ENCODE measurements at regions of chr14 and their contacts with region 1.

Region 1: DNA sequence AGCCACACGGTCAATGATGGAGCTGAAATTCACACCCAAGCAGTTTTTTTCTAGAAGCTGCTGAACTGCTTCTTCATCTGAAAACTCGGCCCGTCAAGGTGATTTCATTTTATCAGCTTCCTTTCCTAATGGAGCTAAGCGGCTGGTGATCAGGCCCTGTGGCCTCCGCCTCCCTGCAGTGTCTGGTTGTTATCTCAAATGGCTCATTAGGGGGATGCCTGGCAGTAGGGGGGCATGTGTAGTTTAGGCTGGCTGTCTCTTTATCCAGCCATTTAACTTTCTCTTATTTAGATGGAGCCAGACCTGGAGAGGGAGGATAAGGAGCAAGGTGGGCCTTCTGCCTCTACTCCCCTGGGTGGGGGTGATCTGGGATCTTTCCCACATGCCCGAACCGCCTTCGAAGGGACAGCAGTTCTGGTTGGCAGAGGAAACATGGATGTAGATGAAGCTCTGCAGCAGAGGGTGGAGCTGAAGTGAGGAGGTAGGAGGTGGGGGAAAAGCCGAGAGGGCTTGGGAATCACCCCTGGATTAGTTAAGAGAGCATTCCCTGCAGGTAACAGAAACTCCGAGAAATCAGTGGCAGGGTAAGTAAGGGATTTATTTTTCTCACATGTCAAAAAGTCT is 64.4 kb downstream of the TGFB3 start:
- DNase-seq: no peak
- H3K4me3 ChIP-seq: no peak overlapping the region
- H3K27ac ChIP-seq: no peak overlapping the region
- H3K4me1 ChIP-seq: no peaks in the 10 kb centered on the region
- H3K27me3 ChIP-seq: no peaks in the 10 kb centered on the region

Region 2: GRCh38 chr14:75906676-75907280 is 10.7 kb before region 1 on chr14:
- CTCF ChIA-PET with region 1: interaction called, 13 read pairs
- POLR2A ChIA-PET with region 1: no interaction called
- DNase-seq: peak; percentile 59 to 83 (median 79)
- H3K4me3 ChIP-seq: no peak overlapping the region
- H3K27ac ChIP-seq: no peak overlapping the region
- H3K4me1 ChIP-seq: peaks cover 7 to 26% (median 17%) of the 10 kb centered on the region in 4 experiments
- H3K27me3 ChIP-seq: no peaks in the 10 kb centered on the region

Measured in common myeloid progenitor, CD34-positive (primary cell).